ENCODE measurements at regions of chr11 and their contacts with region 1.

Region 1: GRCh38 chr11:17354601-17354991 is 3.0 kb downstream of the NCR3LG1 start:
- DNase-seq: peak; percentile 26
- H3K4me3 ChIP-seq: no peak overlapping the region; the same call in 1 of the 2 replicates
- H3K27ac ChIP-seq: no peak overlapping the region
- H3K27me3 ChIP-seq: no peaks in the 10 kb centered on the region
- CTCF ChIP-seq: peak; percentile 73

Region 2: GRCh38 chr11:17077520-17078401 is 276.8 kb before region 1 on chr11 and contains the start of gene RPS13:
- CTCF ChIA-PET with region 1: interaction called, 4 read pairs
- POLR2A ChIA-PET with region 1: interaction called, 31 read pairs
- DNase-seq: peak; percentile 94
- H3K4me3 ChIP-seq: peak within 1 kb of the TSS; percentile 99
- H3K27ac ChIP-seq: peak within 1 kb of the TSS; percentile 86
- H3K27me3 ChIP-seq: no peaks in the 10 kb centered on the region
- CTCF ChIP-seq: no peak
- polyA plus RNA-seq, gene RPS13: 919 and 986 TPM in 2 replicates

Region 3: DNA sequence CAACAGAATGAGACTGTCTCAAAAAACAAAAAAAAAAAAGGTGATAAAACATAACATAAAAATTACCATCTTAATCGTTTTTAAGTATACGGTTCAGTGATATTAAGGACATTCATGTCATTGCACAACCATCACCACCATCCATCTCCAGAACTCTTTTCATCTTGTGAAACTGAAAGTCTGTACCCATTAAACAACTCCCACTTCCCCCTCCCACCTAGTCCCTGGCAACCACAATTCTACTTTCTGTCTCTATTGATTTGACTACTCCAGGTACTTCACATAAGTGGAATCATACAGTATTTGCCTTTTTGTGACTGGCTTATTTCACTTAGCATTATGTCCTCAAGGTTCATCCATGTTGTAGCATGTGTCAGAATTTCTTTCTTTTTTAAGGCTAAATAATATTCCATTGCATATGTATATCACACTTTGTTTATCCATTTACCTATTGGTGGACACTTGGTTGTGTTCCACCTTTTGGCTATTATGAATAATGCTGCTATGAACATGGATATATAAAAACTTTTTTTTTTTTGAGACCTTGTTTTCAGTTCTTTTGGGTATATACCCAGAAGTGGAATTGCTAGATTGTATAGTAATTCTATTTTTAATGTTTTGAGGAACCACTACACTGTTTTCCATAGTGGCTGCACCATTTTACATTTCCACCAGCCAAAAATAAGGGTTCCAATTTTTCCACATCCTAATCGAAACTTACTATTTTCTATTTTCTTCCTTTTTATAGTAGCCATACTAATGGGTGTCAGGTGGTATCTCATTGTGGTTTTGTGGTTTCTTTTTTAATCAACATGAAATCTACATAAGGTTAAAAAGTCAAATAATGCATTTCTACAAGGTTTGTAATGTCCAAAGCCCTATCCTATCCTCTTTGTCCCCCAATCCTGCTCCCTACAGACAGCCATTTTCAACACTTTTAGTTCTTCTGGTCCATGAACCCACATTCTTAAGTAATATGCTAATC is 123.4 kb before region 1 on chr11:
- CTCF ChIA-PET with region 1: interaction called, 31 read pairs
- POLR2A ChIA-PET with region 1: interaction called, 3 read pairs
- DNase-seq: no peak
- H3K4me3 ChIP-seq: no peak overlapping the region
- H3K27ac ChIP-seq: no peak overlapping the region
- H3K27me3 ChIP-seq: no peaks in the 10 kb centered on the region
- CTCF ChIP-seq: no peak

Region 4: DNA sequence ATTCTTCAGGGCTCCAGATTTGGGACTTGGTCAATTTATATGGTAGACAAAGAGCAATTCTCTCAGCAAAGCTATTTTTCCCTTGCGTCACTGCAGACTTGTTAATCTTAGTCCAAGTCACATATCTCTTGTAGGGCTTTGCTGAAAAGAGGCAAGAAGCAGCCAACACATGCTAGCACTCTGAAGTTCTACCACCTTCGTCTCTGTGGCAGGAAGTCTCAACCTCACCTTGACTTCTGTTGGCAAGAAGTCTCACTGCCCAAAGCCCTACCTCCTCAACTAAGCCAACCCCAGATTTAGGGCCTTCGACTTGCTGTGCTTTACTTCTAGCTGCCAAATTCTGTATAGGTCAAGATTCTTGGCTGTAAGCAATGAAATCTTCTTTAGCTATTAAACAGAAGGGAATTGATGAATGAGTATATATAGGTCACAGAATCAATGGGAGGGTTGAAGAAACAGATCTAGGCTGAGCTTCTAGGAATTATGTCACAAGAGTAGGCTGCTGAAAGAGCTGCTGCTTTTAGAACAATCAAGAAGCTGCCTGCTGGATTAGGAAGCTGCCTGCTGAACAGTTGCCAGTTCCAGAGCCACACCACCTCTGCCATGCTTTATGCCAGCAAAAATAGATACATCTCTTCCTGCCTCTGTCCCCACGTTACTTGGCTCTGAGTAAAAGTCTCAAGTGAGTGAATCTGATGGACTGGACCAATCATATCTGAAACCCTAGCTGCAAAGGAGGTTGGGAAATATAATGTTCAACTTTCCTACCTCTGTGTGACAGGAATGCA is 20.6 kb before region 1 on chr11:
- CTCF ChIA-PET with region 1: interaction called, 12 read pairs
- POLR2A ChIA-PET with region 1: interaction called, 12 read pairs
- DNase-seq: no peak
- H3K4me3 ChIP-seq: no peak overlapping the region
- H3K27ac ChIP-seq: no peak overlapping the region
- H3K27me3 ChIP-seq: no peaks in the 10 kb centered on the region
- CTCF ChIP-seq: no peak

Region 5: GRCh38 chr11:17371614-17372013 is 17.0 kb after region 1 on chr11:
- CTCF ChIA-PET with region 1: interaction called, 64 read pairs
- POLR2A ChIA-PET with region 1: interaction called, 11 read pairs
- DNase-seq: no peak
- H3K4me3 ChIP-seq: no peak overlapping the region
- H3K27ac ChIP-seq: no peak overlapping the region
- H3K27me3 ChIP-seq: no peaks in the 10 kb centered on the region
- CTCF ChIP-seq: no peak

Region 6: GRCh38 chr11:17423533-17424310 is 69.1 kb after region 1 on chr11:
- CTCF ChIA-PET with region 1: no interaction called
- POLR2A ChIA-PET with region 1: no interaction called
- DNase-seq: no peak
- H3K4me3 ChIP-seq: no peak overlapping the region
- H3K27ac ChIP-seq: no peak overlapping the region
- H3K27me3 ChIP-seq: peaks cover 28% of the 10 kb centered on the region
- CTCF ChIP-seq: no peak

Region 7: DNA sequence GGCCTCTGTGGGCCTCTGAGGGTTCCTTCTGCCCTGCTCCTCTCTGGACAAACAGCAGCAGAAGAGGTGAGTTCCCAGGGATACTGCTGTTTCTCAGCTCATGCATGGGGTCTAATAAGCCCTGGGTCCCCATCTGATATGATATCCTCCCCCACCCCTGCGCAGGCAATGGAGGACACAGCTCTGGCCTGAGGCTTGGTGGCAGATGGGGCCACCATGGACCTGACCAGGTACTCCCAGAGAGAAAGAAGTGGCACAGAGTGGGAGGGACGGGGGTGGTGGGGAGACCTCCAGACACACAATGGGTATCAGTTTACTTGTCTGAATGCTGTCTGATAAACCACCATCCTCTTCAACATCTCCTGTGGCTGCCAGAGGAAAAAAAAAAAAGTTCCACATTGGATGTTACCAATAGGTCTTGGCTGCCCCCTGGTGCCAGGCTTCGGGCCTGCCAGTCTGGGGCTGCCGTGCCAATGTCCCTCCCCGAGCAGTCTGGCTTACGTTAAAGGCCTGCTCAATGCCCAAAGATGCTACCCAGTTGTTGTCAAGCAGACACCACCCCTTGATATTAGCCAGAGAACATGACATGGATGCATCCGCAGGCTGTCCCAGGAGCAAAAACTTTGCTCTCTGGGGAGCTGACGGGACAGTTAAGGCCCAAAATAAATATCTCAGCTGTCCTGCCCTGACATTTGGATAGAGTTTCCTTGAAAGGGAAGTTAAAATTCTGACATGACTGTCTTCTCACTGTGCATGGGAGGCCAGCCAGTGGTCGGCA is 149.9 kb after region 1 on chr11:
- CTCF ChIA-PET with region 1: interaction called, 24 read pairs
- POLR2A ChIA-PET with region 1: interaction called, 8 read pairs
- DNase-seq: peak; percentile 6
- H3K4me3 ChIP-seq: no peak overlapping the region
- H3K27ac ChIP-seq: no peak overlapping the region
- H3K27me3 ChIP-seq: peaks cover 7% of the 10 kb centered on the region
- CTCF ChIP-seq: peak; percentile 89

Measured in AG04450 (cell line).